Panc1 (cell line): ENCODE measurements at regions of chr1 and their contacts with region 1.

Region 1: GRCh38 chr1:70086897-70087296 is 118.5 kb downstream of the LRRC40 start:
- DNase-seq: no peak
- ATAC-seq: no peak
- H3K4me3 ChIP-seq: no peak overlapping the region
- H3K27ac ChIP-seq: no peak overlapping the region
- H3K4me1 ChIP-seq: no peaks in the 10 kb centered on the region
- H3K27me3 ChIP-seq: no peaks in the 10 kb centered on the region
- CTCF ChIP-seq: no peak

Region 2: DNA sequence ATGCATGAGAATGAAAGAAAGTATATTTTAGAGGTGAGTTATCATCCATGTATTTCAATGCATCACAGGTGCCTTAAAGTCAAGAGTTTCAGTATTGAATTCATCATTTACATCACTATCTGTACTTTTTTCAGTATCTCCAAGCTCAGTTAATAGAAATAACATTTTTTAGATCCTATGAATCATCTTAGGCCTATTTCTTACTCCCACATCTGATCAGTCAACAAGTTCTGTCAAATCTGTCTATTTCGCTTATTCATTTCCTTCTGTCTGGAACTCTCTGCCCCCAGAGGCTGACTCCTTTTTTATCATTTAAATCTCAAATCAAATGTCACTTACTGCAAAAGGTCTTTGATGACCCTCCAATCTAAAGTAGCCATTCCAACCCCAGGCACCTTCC is 224.0 kb before region 1 on chr1:
- CTCF ChIA-PET with region 1: no interaction called
- POLR2A ChIA-PET with region 1: no interaction called
- in situ Hi-C with region 1: no loop called
- intact Hi-C with region 1: no loop called
- DNase-seq: no peak
- ATAC-seq: no peak
- H3K4me3 ChIP-seq: no peak overlapping the region
- H3K27ac ChIP-seq: no peak overlapping the region
- H3K4me1 ChIP-seq: no peaks in the 10 kb centered on the region
- H3K27me3 ChIP-seq: no peaks in the 10 kb centered on the region
- CTCF ChIP-seq: no peak

Region 3: GRCh38 chr1:70284366-70284765 is 197.5 kb after region 1 on chr1:
- CTCF ChIA-PET with region 1: no interaction called
- POLR2A ChIA-PET with region 1: interaction called, 12 read pairs
- in situ Hi-C with region 1: no loop called
- intact Hi-C with region 1: no loop called
- DNase-seq: no peak
- ATAC-seq: no peak
- H3K4me3 ChIP-seq: no peak overlapping the region
- H3K27ac ChIP-seq: no peak overlapping the region
- H3K4me1 ChIP-seq: no peaks in the 10 kb centered on the region
- H3K27me3 ChIP-seq: no peaks in the 10 kb centered on the region
- CTCF ChIP-seq: no peak